ENCODE measurements at regions of chr4 and their contacts with region 1.

Region 1: DNA sequence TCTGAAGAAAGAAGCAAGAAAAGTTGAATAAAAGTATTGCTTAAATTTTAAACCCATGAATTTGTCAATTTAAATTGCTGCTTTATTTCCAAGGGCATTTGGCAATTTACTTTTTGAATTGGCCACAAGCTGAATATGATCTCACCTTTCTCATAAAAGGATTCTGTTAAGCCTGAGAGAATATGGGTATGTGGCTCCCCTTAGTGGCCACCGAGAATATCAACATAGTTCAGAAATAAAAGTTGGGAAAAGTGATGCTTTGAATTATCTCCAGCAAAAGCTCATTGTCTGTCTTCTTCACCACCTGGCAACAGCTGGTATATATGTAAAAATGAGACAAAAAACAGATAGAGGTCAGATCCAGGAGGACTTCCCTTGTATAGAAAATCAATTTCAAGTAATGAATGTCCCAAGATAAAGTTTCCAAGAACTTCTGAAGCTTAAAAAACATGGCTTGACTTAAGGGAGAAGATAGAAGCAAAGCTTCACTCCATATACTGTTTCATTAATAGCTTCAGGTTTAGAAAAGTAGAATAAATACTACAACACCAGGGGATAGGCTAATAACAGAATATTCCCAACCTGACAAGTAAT is 290.7 kb upstream of the FAM241A start:
- DNase-seq: peak; percentile 50
- H3K4me3 Mint-ChIP-seq: no peak overlapping the region
- H3K27ac Mint-ChIP-seq: no peak overlapping the region
- H3K4me1 Mint-ChIP-seq: no peaks in the 10 kb centered on the region
- H3K27me3 Mint-ChIP-seq: peaks cover 41% of the 10 kb centered on the region
- CTCF ChIP-seq: peak; percentile 68

Region 2: GRCh38 chr4:111136438-111136837 is 718.2 kb before region 1 on chr4:
- CTCF ChIA-PET with region 1: interaction called, 14 read pairs
- POLR2A ChIA-PET with region 1: no interaction called
- intact Hi-C with region 1: loop called (anchors 2 kb)
- DNase-seq: peak; percentile 37
- H3K4me3 Mint-ChIP-seq: no peak overlapping the region
- H3K27ac Mint-ChIP-seq: no peak overlapping the region
- H3K4me1 Mint-ChIP-seq: no peaks in the 10 kb centered on the region
- H3K27me3 Mint-ChIP-seq: no peaks in the 10 kb centered on the region
- CTCF ChIP-seq: peak; percentile 34

Region 3: DNA sequence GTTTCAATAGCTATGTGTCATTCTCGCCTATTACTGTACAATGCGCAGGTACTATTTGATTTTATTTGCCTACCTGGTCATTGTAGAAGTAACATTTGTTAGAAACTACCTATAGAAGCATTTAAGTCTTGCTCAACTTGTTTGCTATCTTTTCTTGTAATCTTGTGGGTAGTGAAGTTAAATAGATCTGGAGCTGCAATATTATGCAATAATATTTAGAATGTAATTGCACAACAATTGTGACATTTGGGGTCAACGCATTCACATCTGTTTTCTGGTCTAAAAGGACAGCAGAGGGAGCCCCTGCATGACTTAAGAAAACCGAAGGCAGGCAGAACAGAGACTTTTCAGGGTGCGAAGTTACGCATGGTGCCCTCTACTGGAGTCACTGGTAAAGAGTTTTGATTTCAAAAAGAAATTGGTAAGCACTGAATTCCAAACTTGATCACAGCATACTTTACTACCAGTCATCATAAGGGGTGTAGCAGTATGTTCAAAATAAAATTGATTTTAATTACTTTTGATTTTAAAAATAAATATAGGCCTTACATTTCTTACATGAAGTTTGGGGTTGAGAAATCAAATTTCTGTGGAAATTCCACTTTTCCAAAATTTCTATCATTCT is 212.5 kb before region 1 on chr4:
- CTCF ChIA-PET with region 1: interaction called, 39 read pairs
- POLR2A ChIA-PET with region 1: interaction called, 3 read pairs
- intact Hi-C with region 1: loop called (anchors 1 kb)
- DNase-seq: peak; percentile 91
- H3K4me3 Mint-ChIP-seq: no peak overlapping the region
- H3K27ac Mint-ChIP-seq: no peak overlapping the region
- H3K4me1 Mint-ChIP-seq: peaks cover 8% of the 10 kb centered on the region
- H3K27me3 Mint-ChIP-seq: peaks cover 4% of the 10 kb centered on the region
- CTCF ChIP-seq: peak; percentile 82

Region 4: DNA sequence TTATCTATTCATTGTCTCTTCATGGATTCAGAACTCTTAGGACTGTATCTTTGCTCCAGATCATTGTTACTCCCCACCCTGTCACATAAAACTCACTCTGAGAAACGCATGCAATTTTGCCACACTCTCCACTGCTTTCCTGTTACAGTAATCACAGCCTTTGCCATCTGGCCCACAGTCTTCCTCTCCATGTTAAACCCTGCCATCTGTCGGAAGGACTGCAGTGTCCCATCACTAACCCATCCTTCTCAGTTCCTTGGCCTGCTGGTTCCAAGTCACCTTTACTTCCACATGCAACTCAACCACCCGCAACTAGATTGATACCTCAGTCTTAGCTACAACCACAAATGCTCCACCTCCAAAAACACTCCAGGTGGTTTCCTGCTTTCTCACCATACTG is 18.0 kb before region 1 on chr4:
- CTCF ChIA-PET with region 1: interaction called, 14 read pairs
- POLR2A ChIA-PET with region 1: no interaction called
- intact Hi-C with region 1: no loop called
- DNase-seq: no peak
- H3K4me3 Mint-ChIP-seq: no peak overlapping the region
- H3K27ac Mint-ChIP-seq: no peak overlapping the region
- H3K4me1 Mint-ChIP-seq: no peaks in the 10 kb centered on the region
- H3K27me3 Mint-ChIP-seq: peaks cover 40% of the 10 kb centered on the region
- CTCF ChIP-seq: no peak

Region 5: DNA sequence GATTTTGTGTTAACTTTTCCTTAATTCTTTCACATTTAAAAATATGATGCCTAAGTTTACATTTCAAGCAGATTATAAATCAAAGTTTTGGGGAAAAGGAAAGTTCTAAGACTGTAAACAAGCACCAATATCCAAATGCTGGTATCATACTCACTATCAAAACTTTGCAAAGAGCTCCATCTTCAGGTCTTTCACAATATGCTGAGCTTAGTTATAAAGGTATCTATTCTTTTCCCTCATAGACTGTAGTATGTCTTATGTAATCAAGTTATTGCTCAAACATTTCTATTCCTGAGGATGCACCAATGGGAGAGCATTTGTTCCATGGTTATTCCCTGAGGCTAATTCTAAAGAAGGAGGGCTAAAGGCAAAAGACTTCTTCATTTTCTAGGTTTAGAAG is 82.8 kb after region 1 on chr4:
- CTCF ChIA-PET with region 1: interaction called, 4 read pairs
- POLR2A ChIA-PET with region 1: no interaction called
- intact Hi-C with region 1: loop called (anchors 1 kb)
- DNase-seq: peak; percentile 69
- H3K4me3 Mint-ChIP-seq: no peak overlapping the region
- H3K27ac Mint-ChIP-seq: no peak overlapping the region
- H3K4me1 Mint-ChIP-seq: no peaks in the 10 kb centered on the region
- H3K27me3 Mint-ChIP-seq: peaks cover 55% of the 10 kb centered on the region
- CTCF ChIP-seq: peak; percentile 27

Region 6: GRCh38 chr4:112031712-112032328 is 177.2 kb after region 1 on chr4:
- CTCF ChIA-PET with region 1: interaction called, 18 read pairs
- POLR2A ChIA-PET with region 1: no interaction called
- intact Hi-C with region 1: loop called (anchors 1 kb)
- DNase-seq: peak; percentile 66
- H3K4me3 Mint-ChIP-seq: no peak overlapping the region
- H3K27ac Mint-ChIP-seq: no peak overlapping the region
- H3K4me1 Mint-ChIP-seq: no peaks in the 10 kb centered on the region
- H3K27me3 Mint-ChIP-seq: peaks cover 72% of the 10 kb centered on the region
- CTCF ChIP-seq: peak; percentile 73

Measured in MCF 10A (cell line).